ENCODE measurements at regions of chr14 and their contacts with region 1.

Region 1: DNA sequence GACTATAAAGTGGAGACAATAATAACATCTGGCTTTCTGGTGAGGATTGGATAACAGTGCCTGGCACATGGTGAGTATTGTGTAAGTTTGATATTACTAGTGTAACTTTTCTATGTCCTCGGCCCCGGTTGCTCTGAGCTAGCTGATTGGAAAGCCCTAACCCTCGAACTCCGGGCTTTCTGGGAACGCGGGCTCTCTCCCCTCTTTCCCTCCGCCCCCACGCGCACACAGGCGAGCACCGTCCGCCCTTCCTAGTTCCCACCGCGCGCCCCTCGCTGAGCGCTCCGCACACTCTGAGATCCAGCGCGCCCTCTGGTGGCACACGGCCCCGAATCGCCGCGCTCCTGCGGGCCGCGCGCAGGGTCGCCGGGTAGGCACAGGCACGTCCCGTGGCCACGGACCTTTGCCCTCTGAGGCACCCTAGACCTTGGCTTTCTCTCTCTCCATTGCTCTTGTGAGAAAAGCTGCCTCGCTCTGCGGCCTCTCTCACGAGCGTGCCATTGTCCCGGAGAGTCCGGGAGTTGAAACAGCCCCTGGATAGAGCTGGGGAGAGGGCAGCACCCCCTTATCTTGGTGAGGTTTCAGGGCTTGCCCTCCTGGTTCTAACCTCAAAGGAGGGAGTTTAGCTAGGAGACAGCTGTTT is 23.2 kb upstream of the ESRRB start:
- DNase-seq: peak; percentile 77
- H3K4me3 ChIP-seq: peak overlapping the region in 1 of 2 donors; percentile 3
- H3K27ac ChIP-seq: no peak overlapping the region
- H3K4me1 ChIP-seq: no peaks in the 10 kb centered on the region
- H3K27me3 ChIP-seq: no peaks in the 10 kb centered on the region
- CTCF ChIP-seq: peak; percentile 68 to 85 (median 78)
- POLR2A ChIP-seq: no peak

Region 2: DNA sequence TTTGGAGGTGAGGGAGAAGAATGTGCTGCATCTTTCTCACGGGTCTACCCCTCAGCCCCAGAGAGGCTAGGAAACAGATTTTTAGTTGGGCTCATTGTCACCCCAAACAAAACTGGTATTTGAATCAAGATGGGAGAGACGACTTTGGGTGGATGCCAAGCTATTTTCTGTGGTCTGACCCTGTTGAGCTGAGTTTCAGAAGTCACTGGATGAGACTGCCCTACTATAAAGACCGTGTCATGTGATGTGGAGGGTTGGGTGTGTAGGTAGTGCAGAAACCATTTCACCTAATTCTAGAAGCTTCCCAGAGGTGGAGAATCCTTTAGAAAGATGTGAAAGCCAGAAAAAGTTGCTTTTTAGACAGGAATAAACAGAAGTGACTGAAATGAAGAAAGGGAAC is 307.0 kb before region 1 on chr14:
- intact Hi-C with region 1: loop called (anchors 5 kb)
- DNase-seq: no peak
- H3K4me3 ChIP-seq: no peak overlapping the region
- H3K27ac ChIP-seq: no peak overlapping the region
- H3K4me1 ChIP-seq: peaks cover 4% of the 10 kb centered on the region
- H3K27me3 ChIP-seq: no peaks in the 10 kb centered on the region
- CTCF ChIP-seq: no peak
- POLR2A ChIP-seq: no peak

Region 3: GRCh38 chr14:76509311-76509710 is 156.6 kb after region 1 on chr14:
- intact Hi-C with region 1: no loop called
- DNase-seq: no peak
- H3K4me3 ChIP-seq: no peak overlapping the region
- H3K27ac ChIP-seq: no peak overlapping the region
- H3K4me1 ChIP-seq: no peaks in the 10 kb centered on the region
- H3K27me3 ChIP-seq: no peaks in the 10 kb centered on the region
- CTCF ChIP-seq: no peak
- POLR2A ChIP-seq: no peak

Measured in testis (tissue), 5 donors.